ENCODE measurements at regions of chr9 and their contacts with region 1.

Region 1: DNA sequence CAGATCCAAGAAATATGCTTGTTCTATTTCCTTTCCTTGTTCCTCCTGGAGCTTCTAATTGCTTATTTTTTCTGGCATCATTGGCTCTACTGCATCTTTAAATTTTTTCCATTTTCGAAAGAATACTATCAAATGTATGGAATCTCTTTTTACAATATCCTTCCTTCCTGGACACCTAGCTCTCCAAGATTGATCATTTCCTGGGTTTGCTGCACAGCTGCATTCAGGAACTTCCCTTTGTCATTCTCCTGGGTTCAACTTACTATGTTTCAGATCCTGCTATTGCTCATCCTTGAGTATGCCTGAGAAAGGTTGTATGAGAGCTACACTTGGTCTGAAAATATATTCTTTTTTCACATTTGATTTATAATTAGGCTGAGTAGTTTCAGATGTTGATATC is 73.7 kb upstream of the ERCC6L2 start:
- DNase-seq: no peak
- ATAC-seq: no peak
- H3K4me3 ChIP-seq: no peak overlapping the region
- H3K27ac ChIP-seq: no peak overlapping the region
- H3K4me1 ChIP-seq: no peaks in the 10 kb centered on the region
- H3K27me3 ChIP-seq: peaks cover 0 to 3% (median 0%) of the 10 kb centered on the region in 9 donors
- CTCF ChIP-seq: no peak
- POLR2A ChIP-seq: no peak

Region 2: DNA sequence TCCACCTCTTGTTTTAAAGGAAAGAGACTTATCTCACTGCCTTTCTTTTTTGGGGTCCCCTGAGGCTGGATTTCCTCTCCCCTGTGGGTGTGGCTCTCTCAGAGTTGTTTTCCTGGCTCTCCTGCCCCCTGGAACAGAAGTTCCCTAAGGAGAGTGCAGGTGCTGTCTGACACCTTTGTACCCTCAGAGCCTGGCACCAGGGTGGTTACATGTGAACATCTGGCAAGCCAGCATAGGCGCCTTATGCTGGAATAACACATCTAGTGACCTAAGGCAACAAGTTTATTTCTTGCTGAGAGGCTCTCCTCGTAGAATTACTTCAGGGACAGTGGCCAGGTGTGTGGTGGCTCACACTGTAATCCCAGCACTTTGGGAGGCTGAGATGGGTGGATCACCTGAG is 112.1 kb before region 1 on chr9:
- intact Hi-C with region 1: loop called in 1 of 10 experiments (anchors 5 kb)
- DNase-seq: no peak
- ATAC-seq: no peak
- H3K4me3 ChIP-seq: no peak overlapping the region
- H3K27ac ChIP-seq: no peak overlapping the region
- H3K4me1 ChIP-seq: no peaks in the 10 kb centered on the region
- H3K27me3 ChIP-seq: peaks cover 0 to 9% (median 0%) of the 10 kb centered on the region in 9 donors
- CTCF ChIP-seq: no peak
- POLR2A ChIP-seq: no peak